Naive thymus-derived CD4-positive, alpha-beta T cell (primary cell): ENCODE measurements at regions of chr10 and their contacts with region 1.

Region 1: GRCh38 chr10:128011175-128011979 is 104.5 kb downstream of the PTPRE start:
- DNase-seq: peak; percentile 72 to 97 (median 88)
- ATAC-seq: peak; percentile 100
- H3K4me3 ChIP-seq: no peak overlapping the region
- H3K4me3 Mint-ChIP-seq: peak overlapping the region in 8 of 10 donors; percentile 2 to 62 (median 31)
- H3K27ac ChIP-seq: no peak overlapping the region
- H3K27ac Mint-ChIP-seq: peak overlapping the region in 3 of 9 donors; percentile 27 to 62 (median 48)
- H3K4me1 ChIP-seq: no peaks in the 10 kb centered on the region
- H3K4me1 Mint-ChIP-seq: peaks cover 0 to 8% (median 6%) of the 10 kb centered on the region in 7 donors
- H3K27me3 ChIP-seq: no peaks in the 10 kb centered on the region
- H3K27me3 Mint-ChIP-seq: peaks cover 0 to 5% (median 0%) of the 10 kb centered on the region in 5 donors

Region 2: GRCh38 chr10:127715782-127716378 is 295.5 kb before region 1 on chr10:
- CTCF ChIA-PET with region 1: no interaction called
- POLR2A ChIA-PET with region 1: no interaction called
- intact Hi-C with region 1: loop called in 1 of 2 experiments (anchors 1 kb)
- DNase-seq: peak in 1 of 9 donors; percentile 1
- ATAC-seq: no peak
- H3K4me3 ChIP-seq: no peak overlapping the region
- H3K4me3 Mint-ChIP-seq: no peak overlapping the region
- H3K27ac ChIP-seq: no peak overlapping the region
- H3K27ac Mint-ChIP-seq: no peak overlapping the region
- H3K4me1 ChIP-seq: no peaks in the 10 kb centered on the region
- H3K4me1 Mint-ChIP-seq: no peaks in the 10 kb centered on the region
- H3K27me3 ChIP-seq: no peaks in the 10 kb centered on the region
- H3K27me3 Mint-ChIP-seq: peaks cover 0 to 7% (median 4%) of the 10 kb centered on the region in 5 donors

Region 3: DNA sequence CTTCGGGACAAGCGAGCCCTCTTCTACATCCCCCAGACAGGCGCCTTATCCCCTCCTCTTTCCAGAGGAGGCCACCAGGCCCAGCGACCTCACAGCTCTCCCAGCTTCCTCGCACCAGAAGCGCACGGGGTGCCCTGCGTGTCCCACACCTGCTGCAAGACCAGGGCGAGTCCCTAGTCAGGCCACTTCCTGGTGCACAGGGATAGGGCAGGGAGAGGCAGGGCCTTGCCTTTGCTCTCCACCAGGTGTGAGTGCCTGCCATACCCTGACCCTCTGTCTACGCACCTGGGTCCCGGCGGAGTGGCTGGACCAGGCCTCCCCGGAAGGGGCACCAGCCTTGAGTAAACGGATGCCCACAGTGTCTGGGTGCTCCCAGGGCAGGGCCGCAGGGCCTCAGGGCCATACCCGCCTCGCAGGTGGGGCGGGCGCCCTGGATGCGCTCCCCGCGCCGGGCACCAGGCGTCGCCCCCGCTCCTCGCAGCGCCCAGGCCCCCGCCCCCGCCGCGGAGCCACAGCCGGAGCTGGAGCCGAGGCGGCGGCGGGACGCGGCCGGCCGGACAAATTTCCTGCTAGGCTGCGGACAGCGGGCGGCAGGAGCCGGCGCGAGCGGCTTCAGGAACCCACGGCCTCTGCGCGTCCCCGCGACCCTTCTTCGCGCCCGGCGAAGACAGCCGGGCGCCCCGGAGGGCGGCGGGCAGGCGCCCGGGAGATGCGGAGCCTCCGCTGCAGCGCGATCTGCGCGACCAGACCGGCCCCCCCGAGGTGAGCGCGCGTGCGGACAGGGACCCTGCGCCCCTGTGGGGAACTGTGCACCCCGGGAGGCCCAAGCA is 104.6 kb before region 1 on chr10 and contains the start of gene PTPRE:
- CTCF ChIA-PET with region 1: interaction called, 14 read pairs
- POLR2A ChIA-PET with region 1: no interaction called
- intact Hi-C with region 1: loop called in 1 of 2 experiments (anchors 1 kb)
- DNase-seq: peak; percentile 18 to 82 (median 65)
- ATAC-seq: peak; percentile 95
- H3K4me3 ChIP-seq: peak within 1 kb of the TSS; percentile 39
- H3K4me3 Mint-ChIP-seq: peak within 1 kb of the TSS; percentile 8 to 61 (median 38)
- H3K27ac ChIP-seq: no peak within 1 kb of the TSS
- H3K27ac Mint-ChIP-seq: no peak within 1 kb of the TSS
- H3K4me1 ChIP-seq: no peaks in the 10 kb centered on the region
- H3K4me1 Mint-ChIP-seq: peaks cover 0 to 8% (median 0%) of the 10 kb centered on the region in 7 donors
- H3K27me3 ChIP-seq: no peaks in the 10 kb centered on the region
- H3K27me3 Mint-ChIP-seq: peaks cover 20 to 44% (median 24%) of the 10 kb centered on the region in 5 donors
- total RNA-seq, gene PTPRE: 25.4 to 237 (median 29.1) TPM

Region 4: GRCh38 chr10:128035557-128035973 is 24.2 kb after region 1 on chr10:
- CTCF ChIA-PET with region 1: interaction called, 8 read pairs
- POLR2A ChIA-PET with region 1: no interaction called
- intact Hi-C with region 1: loop called in 1 of 2 experiments (anchors 1 kb)
- DNase-seq: peak in 8 of 9 donors; percentile 33 to 69 (median 50)
- ATAC-seq: peak; percentile 94
- H3K4me3 ChIP-seq: no peak overlapping the region
- H3K4me3 Mint-ChIP-seq: no peak overlapping the region
- H3K27ac ChIP-seq: no peak overlapping the region
- H3K27ac Mint-ChIP-seq: no peak overlapping the region
- H3K4me1 ChIP-seq: no peaks in the 10 kb centered on the region
- H3K4me1 Mint-ChIP-seq: peaks cover 0 to 10% (median 0%) of the 10 kb centered on the region in 7 donors
- H3K27me3 ChIP-seq: no peaks in the 10 kb centered on the region
- H3K27me3 Mint-ChIP-seq: peaks cover 0 to 9% (median 0%) of the 10 kb centered on the region in 5 donors